ENCODE measurements at regions of chr4 and their contacts with region 1.

Region 1: GRCh38 chr4:10582059-10582686 is 102.4 kb downstream of the CLNK start:
- DNase-seq: peak in 1 of 2 donors; percentile 34
- ATAC-seq: peak; percentile 78

Region 2: DNA sequence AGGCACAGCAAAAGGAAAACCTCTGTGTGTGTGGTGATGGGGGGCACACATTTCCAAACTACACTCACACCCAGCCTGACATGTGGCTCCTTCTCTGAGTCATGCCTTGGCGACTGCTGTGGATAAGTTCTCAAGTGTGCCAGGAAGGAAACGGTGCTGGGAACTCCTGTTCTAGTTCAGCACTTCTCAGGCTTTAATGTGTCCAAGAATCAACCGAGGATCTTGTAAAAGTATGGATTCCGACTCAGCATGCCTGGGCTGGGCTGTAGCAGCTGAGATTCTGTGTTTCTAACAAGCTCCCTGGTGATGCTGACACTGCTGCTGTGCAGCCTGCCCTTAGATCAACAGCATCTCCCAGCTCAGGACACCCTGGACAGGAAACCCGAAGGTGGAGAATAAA is 82.2 kb after region 1 on chr4:
- intact Hi-C with region 1: no loop called
- DNase-seq: no peak
- ATAC-seq: peak; percentile 26

Region 3: GRCh38 chr4:11428899-11429698 is 846.9 kb after region 1 on chr4:
- intact Hi-C with region 1: loop called in 1 of 2 experiments (anchors 5 kb)
- DNase-seq: peak; percentile 91
- ATAC-seq: peak; percentile 90

Region 4: DNA sequence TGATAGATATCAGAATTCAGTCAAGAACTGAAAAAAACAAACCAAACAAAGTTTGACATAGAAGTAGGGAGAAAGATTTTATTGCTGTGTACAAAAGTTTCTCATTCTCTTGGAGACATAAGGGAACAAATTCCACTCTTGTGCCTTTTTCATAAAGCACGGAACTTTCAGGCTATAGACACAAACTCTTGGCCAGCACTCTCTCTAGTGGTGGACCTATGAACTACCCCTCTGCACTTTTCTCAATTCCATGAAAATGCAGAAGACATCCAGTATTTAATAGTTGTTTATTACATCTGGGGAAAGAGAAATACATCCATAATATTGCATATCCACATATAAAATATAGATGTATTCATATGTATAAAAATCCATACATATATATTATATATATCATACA is 1138.1 kb after region 1 on chr4:
- intact Hi-C with region 1: loop called in 1 of 2 experiments (anchors 5 kb)
- DNase-seq: no peak
- ATAC-seq: peak; percentile 81

Measured in left colon (tissue), 2 donors.